ENCODE measurements at regions of chr14 and their contacts with region 1.

Region 1: GRCh38 chr14:67359775-67360648 is at the starts of genes ATP6V1D and EIF2S1:
- DNase-seq: peak; percentile 99
- H3K4me3 ChIP-seq: peak within 1 kb of the TSS; percentile 75 to 83 (median 83)
- H3K27ac ChIP-seq: peak within 1 kb of the TSS; percentile 96
- H3K4me1 ChIP-seq: peaks cover 35% of the 10 kb centered on the region
- H3K27me3 ChIP-seq: no peaks in the 10 kb centered on the region
- CTCF ChIP-seq: peak; percentile 81 to 98
- POLR2A ChIP-seq: peak; percentile 75
- total RNA-seq, gene ATP6V1D: 60.7 and 63.1 TPM in 2 replicates
- total RNA-seq, gene EIF2S1: 130 and 135 TPM in 2 replicates

Region 2: GRCh38 chr14:66650491-66650911 is 709.5 kb before region 1 on chr14:
- CTCF ChIA-PET with region 1: no interaction called
- POLR2A ChIA-PET with region 1: no interaction called
- dilution Hi-C with region 1: no loop called
- intact Hi-C with region 1: loop called (anchors 10 kb)
- DNase-seq: peak; percentile 78
- H3K4me3 ChIP-seq: no peak overlapping the region
- H3K27ac ChIP-seq: peak overlapping the region; percentile 63
- H3K4me1 ChIP-seq: peaks cover 22% of the 10 kb centered on the region
- H3K27me3 ChIP-seq: no peaks in the 10 kb centered on the region
- CTCF ChIP-seq: no peak
- POLR2A ChIP-seq: no peak

Region 3: GRCh38 chr14:67187210-67187609 is 172.8 kb before region 1 on chr14:
- CTCF ChIA-PET with region 1: no interaction called
- POLR2A ChIA-PET with region 1: no interaction called
- dilution Hi-C with region 1: no loop called
- intact Hi-C with region 1: no loop called
- DNase-seq: peak; percentile 31
- H3K4me3 ChIP-seq: no peak overlapping the region
- H3K27ac ChIP-seq: no peak overlapping the region
- H3K4me1 ChIP-seq: peaks cover 10% of the 10 kb centered on the region
- H3K27me3 ChIP-seq: no peaks in the 10 kb centered on the region
- CTCF ChIP-seq: no peak
- POLR2A ChIP-seq: no peak

Region 4: DNA sequence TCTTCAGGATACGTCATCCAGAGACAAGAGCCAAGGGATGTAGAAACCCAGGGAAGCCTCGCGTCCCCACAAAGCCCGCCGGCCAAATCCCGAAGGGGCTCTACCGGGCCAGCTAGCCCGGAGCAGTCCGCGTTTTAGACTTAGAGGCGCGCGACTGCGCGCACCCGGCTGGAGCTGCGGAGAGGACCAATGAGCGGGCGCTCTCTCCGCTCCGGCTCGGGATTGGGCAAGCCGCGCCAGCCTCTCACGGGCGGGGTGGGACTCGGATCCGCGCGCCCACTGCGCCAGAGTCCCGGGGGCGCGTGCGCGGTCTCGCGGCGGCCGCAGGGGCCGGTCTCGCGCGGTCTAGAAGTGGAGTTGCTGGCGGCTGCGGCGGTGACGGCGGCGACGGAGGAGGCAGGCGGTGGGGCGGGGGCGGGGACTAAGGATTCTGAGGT is 119.0 kb before region 1 on chr14:
- CTCF ChIA-PET with region 1: interaction called, 5 read pairs
- POLR2A ChIA-PET with region 1: no interaction called
- dilution Hi-C with region 1: no loop called
- intact Hi-C with region 1: loop called (anchors 1 kb)
- DNase-seq: peak; percentile 99
- H3K4me3 ChIP-seq: peak overlapping the region; percentile 79 to 99 (median 90)
- H3K27ac ChIP-seq: peak overlapping the region; percentile 82
- H3K4me1 ChIP-seq: peaks cover 13% of the 10 kb centered on the region
- H3K27me3 ChIP-seq: peaks cover 0 to 4% of the 10 kb centered on the region in 2 experiments
- CTCF ChIP-seq: no peak
- POLR2A ChIP-seq: peak; percentile 63

Region 5: DNA sequence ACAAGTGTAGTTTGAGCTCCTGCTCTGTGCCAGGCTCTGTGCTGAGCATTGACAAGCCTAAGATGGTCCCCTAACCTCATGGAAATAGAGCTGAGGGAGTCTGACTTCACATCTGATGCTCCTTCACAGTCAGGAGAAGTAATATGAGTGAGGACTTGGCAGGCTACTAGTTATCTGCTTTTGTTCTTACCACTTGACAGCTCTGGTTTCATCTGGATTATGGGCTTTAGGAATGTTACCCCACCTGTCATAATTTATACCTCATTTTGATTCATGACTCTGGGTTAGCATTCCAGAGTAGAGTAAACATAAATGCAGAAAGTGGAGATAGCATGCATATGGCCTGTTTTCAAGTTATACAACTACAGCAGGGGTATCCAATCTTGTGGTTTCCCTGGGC is 40.9 kb before region 1 on chr14:
- CTCF ChIA-PET with region 1: no interaction called
- POLR2A ChIA-PET with region 1: no interaction called
- dilution Hi-C with region 1: no loop called
- intact Hi-C with region 1: no loop called
- DNase-seq: no peak
- H3K4me3 ChIP-seq: no peak overlapping the region
- H3K27ac ChIP-seq: no peak overlapping the region
- H3K4me1 ChIP-seq: no peaks in the 10 kb centered on the region
- H3K27me3 ChIP-seq: no peaks in the 10 kb centered on the region
- CTCF ChIP-seq: no peak
- POLR2A ChIP-seq: no peak

Region 6: GRCh38 chr14:67411820-67412421 is 51.9 kb after region 1 on chr14 and contains the start of gene PLEK2:
- CTCF ChIA-PET with region 1: interaction called, 8 read pairs
- POLR2A ChIA-PET with region 1: no interaction called
- dilution Hi-C with region 1: no loop called
- intact Hi-C with region 1: loop called (anchors 1 kb)
- DNase-seq: no peak
- H3K4me3 ChIP-seq: peak within 1 kb of the TSS in 1 of 3 experiments; percentile 28
- H3K27ac ChIP-seq: no peak within 1 kb of the TSS
- H3K4me1 ChIP-seq: peaks cover 19% of the 10 kb centered on the region
- H3K27me3 ChIP-seq: no peaks in the 10 kb centered on the region
- CTCF ChIP-seq: no peak
- POLR2A ChIP-seq: no peak
- total RNA-seq, gene PLEK2: 3.8 and 4.7 TPM in 2 replicates

Measured in endothelial cell of umbilical vein (primary cell).